HepG2 (cell line): ENCODE measurements at regions of chr4 and their contacts with region 1.

Region 1: DNA sequence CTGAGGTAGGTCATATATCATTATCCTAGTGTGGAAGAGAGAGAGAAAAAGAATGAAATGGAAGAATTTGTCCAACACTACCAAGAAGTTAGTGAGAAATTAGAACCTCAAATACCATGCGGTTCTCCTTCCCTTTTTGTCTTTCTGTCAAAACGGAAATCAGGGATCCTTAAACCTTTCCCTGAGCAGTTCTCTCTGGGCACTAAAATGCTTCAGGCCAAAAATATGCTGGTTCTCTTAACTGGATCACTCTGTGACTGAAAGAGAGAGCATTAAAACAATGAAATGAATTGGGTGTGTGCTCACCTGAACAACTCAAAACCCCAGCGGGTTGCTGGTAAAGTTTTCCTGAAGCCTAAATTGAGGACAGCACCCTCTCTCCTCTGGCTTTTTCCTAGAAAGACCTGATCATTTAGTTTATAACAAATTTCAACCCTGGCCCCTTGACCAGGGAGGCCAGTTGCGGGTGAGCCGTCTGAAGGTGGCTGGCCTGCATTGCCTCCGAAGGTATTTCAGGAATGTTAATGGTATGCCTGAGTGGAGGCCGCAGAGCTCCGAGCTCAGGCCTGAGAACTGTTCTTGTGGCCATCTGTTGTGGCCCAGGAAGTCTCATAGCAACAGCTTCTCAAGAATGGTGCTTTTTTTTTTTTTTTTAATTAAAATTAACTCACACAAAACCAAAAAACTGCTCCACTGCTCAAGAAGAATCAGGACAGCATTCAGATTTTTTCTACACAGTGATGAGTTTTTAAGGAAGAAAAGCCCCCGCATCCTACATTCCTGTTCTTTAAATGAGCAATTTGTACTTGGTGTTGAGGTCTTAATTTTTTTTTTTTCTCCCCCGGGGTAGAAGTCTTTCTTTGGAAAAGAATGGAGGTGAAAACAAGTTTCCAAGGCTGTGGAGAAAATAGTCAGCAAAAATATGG is 155.1 kb downstream of the SHROOM3 start:
- DNase-seq: peak; percentile 52
- ATAC-seq: peak; percentile 97
- H3K4me3 ChIP-seq: no peak overlapping the region
- H3K27ac ChIP-seq: no peak overlapping the region
- H3K4me1 ChIP-seq: peaks cover 13% of the 10 kb centered on the region
- H3K27me3 ChIP-seq: peaks cover 3 to 28% of the 10 kb centered on the region in 2 experiments
- CTCF ChIP-seq: no peak
- EP300 ChIP-seq: no peak
- POLR2A ChIP-seq: no peak
- RAD21 ChIP-seq: no peak

Region 2: GRCh38 chr4:76570141-76570973 is 19.8 kb before region 1 on chr4:
- CTCF ChIA-PET with region 1: no interaction called
- POLR2A ChIA-PET with region 1: interaction called, 4 read pairs
- in situ Hi-C with region 1: no loop called
- intact Hi-C with region 1: loop called (anchors 2 kb)
- DNase-seq: peak; percentile 90
- ATAC-seq: peak; percentile 90
- H3K4me3 ChIP-seq: peak overlapping the region in 1 of 3 experiments; percentile 20; a peak in 2 of 6 replicates
- H3K27ac ChIP-seq: no peak overlapping the region
- H3K4me1 ChIP-seq: peaks cover 33% of the 10 kb centered on the region
- H3K27me3 ChIP-seq: no peaks in the 10 kb centered on the region; a peak in 1 of 5 replicates
- CTCF ChIP-seq: no peak
- EP300 ChIP-seq: no peak; a peak in 1 of 4 replicates
- POLR2A ChIP-seq: no peak
- RAD21 ChIP-seq: no peak